Head of caudate nucleus (tissue), 42 donors: ENCODE measurements at regions of chr7 and their contacts with region 1.

Region 1: GRCh38 chr7:158695726-158696452 is 8.7 kb downstream of the NCAPG2 start:
- DNase-seq: peak in 41 of 42 donors; percentile 21 to 82 (median 55)

Region 2: DNA sequence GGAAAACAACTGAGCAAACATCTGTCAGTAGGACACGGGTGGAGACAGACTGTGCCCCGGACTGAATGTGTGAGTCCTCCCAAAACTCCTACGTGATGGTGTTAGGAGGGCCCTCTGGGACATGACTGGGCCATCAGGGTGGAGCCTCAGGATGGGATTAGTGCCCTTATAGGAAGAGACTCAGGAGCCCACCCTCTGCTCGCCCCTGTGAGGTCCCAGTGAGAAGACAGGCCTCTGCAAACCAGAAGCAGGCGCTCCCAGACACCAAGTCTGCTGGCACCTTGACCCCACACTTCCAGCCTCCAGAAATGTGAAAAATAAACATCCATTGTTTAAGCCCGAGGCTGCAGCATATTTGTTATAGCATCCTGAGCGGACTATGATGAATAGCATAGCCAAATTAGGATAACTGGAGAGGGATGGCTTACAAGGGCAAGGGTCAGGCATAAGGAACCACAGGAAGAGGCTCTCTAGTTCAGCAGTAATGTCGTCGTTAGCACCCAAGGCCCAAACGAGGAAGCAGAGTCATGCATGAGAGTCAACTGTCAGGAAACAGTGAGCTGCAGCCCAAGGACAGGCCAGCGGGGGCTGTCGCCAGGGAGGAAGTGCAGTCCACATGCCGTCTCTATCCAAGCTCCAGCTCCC is 158.9 kb before region 1 on chr7:
- intact Hi-C with region 1: no loop called
- DNase-seq: no peak

Region 3: DNA sequence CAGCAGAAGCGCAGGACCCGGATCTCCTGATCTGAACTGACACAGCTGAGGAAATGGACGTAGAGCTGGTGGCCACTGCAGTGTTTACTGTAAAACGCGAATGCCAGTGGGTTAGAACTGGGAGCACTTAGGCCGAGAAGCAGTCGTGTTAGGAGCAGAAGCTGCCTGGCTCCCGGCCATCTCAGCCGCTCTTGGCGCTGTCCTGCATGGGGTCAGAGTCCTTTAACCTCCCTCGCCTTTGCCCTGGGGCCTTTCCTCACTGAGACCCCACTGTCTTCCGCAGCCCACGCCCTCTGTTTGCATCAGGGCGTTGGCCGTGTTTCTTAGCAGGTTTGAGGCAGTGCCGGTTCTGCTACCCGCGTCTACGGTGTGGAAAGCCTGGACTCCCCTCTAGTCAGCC is 185.1 kb after region 1 on chr7:
- intact Hi-C with region 1: no loop called
- DNase-seq: peak in 1 of 42 donors; percentile 40

Region 4: GRCh38 chr7:158976849-158977593 is 281.1 kb after region 1 on chr7:
- intact Hi-C with region 1: loop called (anchors 5 kb)
- DNase-seq: peak; percentile 68 to 94 (median 86)